B cell (primary cell): ENCODE measurements at regions of chr12 and their contacts with region 1.

Region 1: DNA sequence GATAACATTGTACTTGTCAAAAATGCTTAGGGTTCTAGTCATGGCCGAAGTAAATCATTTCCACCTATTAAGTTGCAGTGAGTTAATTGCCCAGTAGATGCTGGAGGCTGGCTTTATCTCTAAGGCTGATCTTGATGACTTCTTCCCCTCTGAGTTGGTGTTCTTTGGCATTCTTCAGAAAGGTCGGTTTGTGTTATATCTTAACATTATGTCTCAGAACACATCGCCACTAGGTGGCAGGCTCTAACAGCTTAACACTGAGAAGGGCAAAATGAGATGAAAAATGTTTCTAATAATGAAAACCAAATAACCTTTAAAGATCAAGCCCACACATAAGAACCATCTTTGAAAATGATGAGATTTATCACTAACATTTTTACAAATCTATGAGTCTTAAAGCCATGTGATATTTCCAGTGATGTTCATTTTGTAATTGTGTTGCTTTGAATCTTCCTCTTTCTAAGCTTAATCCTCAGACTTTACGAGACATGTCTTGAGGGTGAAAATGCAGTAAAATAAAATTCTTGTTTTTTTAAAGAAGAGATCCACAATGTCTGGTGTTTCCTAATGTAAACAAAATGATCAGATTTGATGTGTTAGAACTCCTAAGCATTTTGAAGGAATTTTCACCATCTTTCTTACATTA is 28.6 kb downstream of the SUDS3 start:
- DNase-seq: peak; percentile 55
- ATAC-seq: no peak
- H3K4me3 ChIP-seq: no peak overlapping the region
- H3K4me3 Mint-ChIP-seq: no peak overlapping the region
- H3K27ac ChIP-seq: no peak overlapping the region
- H3K27ac Mint-ChIP-seq: no peak overlapping the region
- H3K4me1 ChIP-seq: no peaks in the 10 kb centered on the region
- H3K4me1 Mint-ChIP-seq: no peaks in the 10 kb centered on the region
- H3K27me3 ChIP-seq: no peaks in the 10 kb centered on the region
- H3K27me3 Mint-ChIP-seq: no peaks in the 10 kb centered on the region
- CTCF ChIP-seq: peak; percentile 87

Region 2: DNA sequence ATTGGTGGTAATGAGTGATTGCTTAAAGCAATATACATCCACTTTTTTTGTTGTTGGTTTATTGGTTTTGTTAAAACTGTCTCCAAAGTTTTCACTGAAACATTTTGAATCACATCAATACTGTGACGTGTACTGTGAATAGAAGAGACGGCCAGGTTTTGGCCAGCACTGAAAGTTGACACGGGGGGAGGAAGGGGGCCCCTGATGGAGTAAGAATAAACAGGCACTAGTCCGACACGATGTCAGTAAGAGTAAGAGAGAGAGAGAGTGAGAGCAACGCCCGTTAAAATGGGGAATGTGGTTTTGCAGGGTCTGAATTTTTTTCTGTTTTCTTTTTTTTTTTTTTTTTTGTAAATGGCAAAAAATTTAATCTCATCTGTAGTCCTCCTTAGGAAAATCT is 254.4 kb before region 1 on chr12:
- CTCF ChIA-PET with region 1: no interaction called
- POLR2A ChIA-PET with region 1: no interaction called
- intact Hi-C with region 1: no loop called
- DNase-seq: no peak
- ATAC-seq: no peak
- H3K4me3 ChIP-seq: no peak overlapping the region
- H3K4me3 Mint-ChIP-seq: no peak overlapping the region
- H3K27ac ChIP-seq: no peak overlapping the region
- H3K27ac Mint-ChIP-seq: no peak overlapping the region
- H3K4me1 ChIP-seq: no peaks in the 10 kb centered on the region
- H3K4me1 Mint-ChIP-seq: no peaks in the 10 kb centered on the region
- H3K27me3 ChIP-seq: no peaks in the 10 kb centered on the region
- H3K27me3 Mint-ChIP-seq: no peaks in the 10 kb centered on the region
- CTCF ChIP-seq: no peak

Region 3: GRCh38 chr12:118391836-118392235 is 13.2 kb before region 1 on chr12:
- CTCF ChIA-PET with region 1: interaction called, 24 read pairs
- POLR2A ChIA-PET with region 1: no interaction called
- intact Hi-C with region 1: no loop called
- DNase-seq: no peak
- ATAC-seq: no peak
- H3K4me3 ChIP-seq: no peak overlapping the region
- H3K4me3 Mint-ChIP-seq: no peak overlapping the region
- H3K27ac ChIP-seq: no peak overlapping the region
- H3K27ac Mint-ChIP-seq: no peak overlapping the region
- H3K4me1 ChIP-seq: no peaks in the 10 kb centered on the region
- H3K4me1 Mint-ChIP-seq: no peaks in the 10 kb centered on the region
- H3K27me3 ChIP-seq: no peaks in the 10 kb centered on the region
- H3K27me3 Mint-ChIP-seq: no peaks in the 10 kb centered on the region
- CTCF ChIP-seq: no peak

Region 4: GRCh38 chr12:118418385-118419057 is 13.5 kb after region 1 on chr12:
- CTCF ChIA-PET with region 1: interaction called, 13 read pairs
- POLR2A ChIA-PET with region 1: no interaction called
- intact Hi-C with region 1: no loop called
- DNase-seq: no peak
- ATAC-seq: no peak
- H3K4me3 ChIP-seq: no peak overlapping the region
- H3K4me3 Mint-ChIP-seq: no peak overlapping the region
- H3K27ac ChIP-seq: no peak overlapping the region
- H3K27ac Mint-ChIP-seq: no peak overlapping the region
- H3K4me1 ChIP-seq: no peaks in the 10 kb centered on the region
- H3K4me1 Mint-ChIP-seq: no peaks in the 10 kb centered on the region
- H3K27me3 ChIP-seq: no peaks in the 10 kb centered on the region
- H3K27me3 Mint-ChIP-seq: no peaks in the 10 kb centered on the region
- CTCF ChIP-seq: no peak

Region 5: GRCh38 chr12:118467641-118468305 is 62.8 kb after region 1 on chr12:
- CTCF ChIA-PET with region 1: no interaction called
- POLR2A ChIA-PET with region 1: no interaction called
- intact Hi-C with region 1: no loop called
- DNase-seq: no peak
- ATAC-seq: no peak
- H3K4me3 ChIP-seq: no peak overlapping the region
- H3K4me3 Mint-ChIP-seq: no peak overlapping the region
- H3K27ac ChIP-seq: no peak overlapping the region
- H3K27ac Mint-ChIP-seq: no peak overlapping the region
- H3K4me1 ChIP-seq: no peaks in the 10 kb centered on the region
- H3K4me1 Mint-ChIP-seq: no peaks in the 10 kb centered on the region
- H3K27me3 ChIP-seq: no peaks in the 10 kb centered on the region
- H3K27me3 Mint-ChIP-seq: peaks cover 9% of the 10 kb centered on the region
- CTCF ChIP-seq: no peak

Region 6: GRCh38 chr12:118526255-118527095 is 121.5 kb after region 1 on chr12:
- CTCF ChIA-PET with region 1: no interaction called
- POLR2A ChIA-PET with region 1: no interaction called
- intact Hi-C with region 1: no loop called
- DNase-seq: no peak
- ATAC-seq: no peak
- H3K4me3 ChIP-seq: no peak overlapping the region
- H3K4me3 Mint-ChIP-seq: no peak overlapping the region
- H3K27ac ChIP-seq: no peak overlapping the region
- H3K27ac Mint-ChIP-seq: no peak overlapping the region
- H3K4me1 ChIP-seq: no peaks in the 10 kb centered on the region
- H3K4me1 Mint-ChIP-seq: no peaks in the 10 kb centered on the region
- H3K27me3 ChIP-seq: no peaks in the 10 kb centered on the region
- H3K27me3 Mint-ChIP-seq: peaks cover 5% of the 10 kb centered on the region
- CTCF ChIP-seq: no peak

Region 7: DNA sequence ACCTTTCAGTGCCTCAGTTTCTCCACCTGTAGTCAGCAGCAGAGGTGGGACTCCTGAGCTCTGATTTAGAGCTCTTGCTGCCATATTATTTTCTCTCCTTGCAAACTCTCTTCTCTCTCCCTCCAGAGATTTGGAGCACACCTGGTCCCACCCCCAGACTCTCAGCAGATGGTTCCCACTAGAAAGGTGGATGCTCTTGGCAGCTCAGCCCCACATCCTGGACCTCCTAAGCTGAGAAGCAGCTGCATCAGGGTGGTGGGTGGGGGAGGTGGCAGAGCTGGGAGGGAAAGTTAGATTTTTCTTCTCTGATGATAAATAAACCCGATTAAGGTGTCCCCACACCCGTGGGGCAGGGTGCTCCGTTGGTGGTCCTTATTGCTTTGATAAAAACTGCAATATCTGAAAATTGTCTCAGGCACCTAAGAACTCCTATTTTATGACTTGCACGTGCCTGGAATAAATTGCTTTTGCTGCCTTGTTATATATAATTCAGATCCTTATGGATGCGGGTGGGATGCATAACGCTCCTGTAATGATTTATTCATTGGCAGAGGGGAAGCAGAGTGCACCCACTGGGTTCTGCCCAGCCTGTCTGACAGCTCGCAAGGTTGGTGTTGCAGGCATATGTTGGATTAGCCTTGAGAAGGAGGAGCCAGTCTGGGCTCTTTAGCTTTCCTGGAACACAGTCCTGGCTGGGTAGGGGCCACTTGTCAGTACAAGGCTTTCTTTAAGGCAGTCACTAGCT is 185.6 kb after region 1 on chr12:
- CTCF ChIA-PET with region 1: no interaction called
- POLR2A ChIA-PET with region 1: no interaction called
- intact Hi-C with region 1: no loop called
- DNase-seq: no peak
- ATAC-seq: no peak
- H3K4me3 ChIP-seq: no peak overlapping the region
- H3K4me3 Mint-ChIP-seq: no peak overlapping the region
- H3K27ac ChIP-seq: no peak overlapping the region
- H3K27ac Mint-ChIP-seq: no peak overlapping the region
- H3K4me1 ChIP-seq: no peaks in the 10 kb centered on the region
- H3K4me1 Mint-ChIP-seq: no peaks in the 10 kb centered on the region
- H3K27me3 ChIP-seq: no peaks in the 10 kb centered on the region
- H3K27me3 Mint-ChIP-seq: no peaks in the 10 kb centered on the region
- CTCF ChIP-seq: no peak

Region 8: DNA sequence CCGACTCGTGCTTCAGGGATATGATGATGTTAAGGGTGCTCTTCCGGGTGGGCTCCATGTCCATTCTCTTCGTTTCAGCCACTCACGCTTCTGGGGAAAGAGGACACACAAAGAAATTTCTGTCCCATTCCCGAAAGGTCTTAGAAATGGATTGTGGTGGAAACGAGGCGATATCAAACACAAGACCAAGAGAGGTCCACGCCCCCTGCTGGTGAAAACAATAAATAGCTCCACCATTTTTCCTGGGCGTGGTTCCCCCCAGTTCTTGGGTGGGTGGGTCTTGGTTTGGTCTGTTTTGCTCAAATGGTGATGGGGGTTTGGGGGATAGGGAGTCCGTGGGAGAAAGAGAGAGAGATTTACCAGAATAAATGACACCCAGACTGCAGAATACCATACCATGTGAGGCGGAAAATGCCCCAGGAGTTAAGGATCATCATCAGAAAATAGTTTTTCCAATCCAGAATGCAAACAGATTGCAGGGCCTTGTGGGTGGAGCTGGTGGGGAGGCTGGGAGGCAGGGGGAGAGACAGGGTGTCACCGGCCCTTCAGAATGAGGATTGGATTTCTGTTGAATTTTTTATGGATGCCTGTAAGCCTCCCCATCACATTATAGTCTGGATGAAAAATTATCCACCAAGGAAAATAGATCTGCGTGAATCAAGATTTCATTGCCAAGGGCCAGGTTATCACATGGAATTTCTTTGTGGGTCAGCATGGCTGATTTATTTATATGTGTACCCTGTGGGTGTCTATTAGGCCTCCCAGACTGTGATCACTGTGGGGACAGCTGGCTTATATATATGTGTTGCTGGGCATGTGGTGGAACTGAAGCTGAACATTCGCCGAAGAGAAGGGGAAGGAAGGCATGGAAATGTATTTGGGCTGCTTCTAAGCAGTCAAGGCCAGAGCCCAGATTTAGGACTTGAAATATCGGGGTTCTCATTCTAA is 632.2 kb after region 1 on chr12:
- CTCF ChIA-PET with region 1: interaction called, 4 read pairs
- POLR2A ChIA-PET with region 1: no interaction called
- intact Hi-C with region 1: loop called (anchors 10 kb)
- DNase-seq: peak; percentile 19
- ATAC-seq: no peak
- H3K4me3 ChIP-seq: no peak overlapping the region
- H3K4me3 Mint-ChIP-seq: no peak overlapping the region
- H3K27ac ChIP-seq: no peak overlapping the region
- H3K27ac Mint-ChIP-seq: no peak overlapping the region
- H3K4me1 ChIP-seq: no peaks in the 10 kb centered on the region
- H3K4me1 Mint-ChIP-seq: no peaks in the 10 kb centered on the region
- H3K27me3 ChIP-seq: no peaks in the 10 kb centered on the region
- H3K27me3 Mint-ChIP-seq: peaks cover 5% of the 10 kb centered on the region
- CTCF ChIP-seq: peak; percentile 48

Region 9: GRCh38 chr12:119412811-119413794 is 1008.1 kb after region 1 on chr12:
- CTCF ChIA-PET with region 1: no interaction called
- POLR2A ChIA-PET with region 1: no interaction called
- intact Hi-C with region 1: loop called (anchors 10 kb)
- DNase-seq: peak; percentile 26
- ATAC-seq: no peak
- H3K4me3 ChIP-seq: no peak overlapping the region
- H3K4me3 Mint-ChIP-seq: no peak overlapping the region
- H3K27ac ChIP-seq: no peak overlapping the region
- H3K27ac Mint-ChIP-seq: no peak overlapping the region
- H3K4me1 ChIP-seq: no peaks in the 10 kb centered on the region
- H3K4me1 Mint-ChIP-seq: no peaks in the 10 kb centered on the region
- H3K27me3 ChIP-seq: peaks cover 0 to 6% (median 3%) of the 10 kb centered on the region in 4 experiments
- H3K27me3 Mint-ChIP-seq: peaks cover 11% of the 10 kb centered on the region
- CTCF ChIP-seq: peak; percentile 49

Region 10: DNA sequence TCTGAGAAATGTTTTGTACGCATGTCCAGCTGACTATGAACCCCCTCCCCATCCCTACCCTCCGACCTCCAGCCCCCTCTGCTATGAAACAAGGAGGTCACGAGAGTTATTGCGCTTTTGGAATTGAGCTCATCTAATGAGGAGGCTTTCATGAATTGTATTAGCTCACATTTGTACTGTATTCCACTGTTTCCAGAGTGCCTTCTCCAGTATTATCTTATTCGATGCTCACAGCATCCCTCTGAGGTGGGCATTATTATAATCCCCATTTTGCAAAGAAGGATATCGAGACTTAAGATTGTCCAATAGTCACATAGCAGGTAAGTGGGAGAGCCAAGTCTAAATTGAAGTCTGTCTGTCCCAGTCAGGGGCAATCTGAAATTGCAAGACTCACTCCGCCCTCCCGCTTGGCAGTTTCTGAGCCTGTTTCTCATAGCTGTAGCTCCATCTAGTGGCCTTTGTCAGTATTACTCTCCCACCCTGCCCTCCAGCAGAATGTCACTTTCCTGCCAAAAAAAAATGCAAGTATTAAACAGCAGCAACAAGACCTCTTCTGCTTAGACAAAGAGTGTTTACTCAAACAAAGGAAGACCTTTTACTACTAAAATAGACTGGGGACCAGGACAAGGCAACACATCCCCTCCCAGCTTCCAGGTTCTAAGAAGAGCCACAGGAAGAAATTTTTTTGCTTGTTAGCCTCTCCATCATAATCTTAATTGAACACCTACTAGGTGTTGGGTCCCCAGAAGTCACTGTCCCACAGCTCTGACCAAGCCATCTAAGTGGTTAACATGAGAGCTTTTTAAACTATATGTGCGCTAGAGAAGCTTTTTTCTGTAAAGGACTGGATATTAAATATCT is 1140.0 kb after region 1 on chr12:
- CTCF ChIA-PET with region 1: interaction called, 11 read pairs
- POLR2A ChIA-PET with region 1: no interaction called
- intact Hi-C with region 1: no loop called
- DNase-seq: peak; percentile 65
- ATAC-seq: peak; percentile 63
- H3K4me3 ChIP-seq: no peak overlapping the region
- H3K4me3 Mint-ChIP-seq: no peak overlapping the region
- H3K27ac ChIP-seq: no peak overlapping the region
- H3K27ac Mint-ChIP-seq: no peak overlapping the region
- H3K4me1 ChIP-seq: no peaks in the 10 kb centered on the region
- H3K4me1 Mint-ChIP-seq: no peaks in the 10 kb centered on the region
- H3K27me3 ChIP-seq: no peaks in the 10 kb centered on the region
- H3K27me3 Mint-ChIP-seq: peaks cover 49% of the 10 kb centered on the region
- CTCF ChIP-seq: peak; percentile 82